Mucosa of descending colon (tissue), 3 donors: ENCODE measurements at regions of chr18 and their contacts with region 1.

Region 1: GRCh38 chr18:7000484-7001096 is 117.0 kb downstream of the LAMA1 start:
- DNase-seq: peak in 1 of 3 donors; percentile 46
- ATAC-seq: peak; percentile 75
- H3K4me3 ChIP-seq: no peak overlapping the region
- H3K4me1 ChIP-seq: no peaks in the 10 kb centered on the region
- CTCF ChIP-seq: peak; percentile 18

Region 2: GRCh38 chr18:6920099-6920899 is 80.3 kb before region 1 on chr18:
- intact Hi-C with region 1: loop called in 1 of 2 experiments (anchors 2 kb)
- DNase-seq: peak in 1 of 3 donors; percentile 93
- ATAC-seq: peak; percentile 86
- H3K4me3 ChIP-seq: no peak overlapping the region
- H3K4me1 ChIP-seq: no peaks in the 10 kb centered on the region
- CTCF ChIP-seq: peak; percentile 42